Common myeloid progenitor, CD34-positive (primary cell): ENCODE measurements at regions of chr3 and their contacts with region 1.

Region 1: GRCh38 chr3:73086071-73086494 is 24.6 kb downstream of the EBLN2 start:
- DNase-seq: peak; percentile 46 to 61 (median 50)
- H3K4me3 ChIP-seq: peak overlapping the region in 1 of 7 experiments; percentile 2
- H3K27ac ChIP-seq: no peak overlapping the region
- H3K4me1 ChIP-seq: peaks cover 0 to 2% (median 0%) of the 10 kb centered on the region in 4 experiments
- H3K27me3 ChIP-seq: no peaks in the 10 kb centered on the region

Region 2: GRCh38 chr3:72847751-72848702 is 238.1 kb before region 1 on chr3 and contains the start of gene SHQ1:
- CTCF ChIA-PET with region 1: interaction called, 51 read pairs
- POLR2A ChIA-PET with region 1: no interaction called
- DNase-seq: peak; percentile 95 to 97 (median 97)
- H3K4me3 ChIP-seq: peak within 1 kb of the TSS; percentile 54 to 96 (median 87)
- H3K27ac ChIP-seq: peak within 1 kb of the TSS in 1 of 2 experiments; percentile 69
- H3K4me1 ChIP-seq: peaks cover 19 to 49% (median 32%) of the 10 kb centered on the region in 4 experiments
- H3K27me3 ChIP-seq: no peaks in the 10 kb centered on the region

Region 3: DNA sequence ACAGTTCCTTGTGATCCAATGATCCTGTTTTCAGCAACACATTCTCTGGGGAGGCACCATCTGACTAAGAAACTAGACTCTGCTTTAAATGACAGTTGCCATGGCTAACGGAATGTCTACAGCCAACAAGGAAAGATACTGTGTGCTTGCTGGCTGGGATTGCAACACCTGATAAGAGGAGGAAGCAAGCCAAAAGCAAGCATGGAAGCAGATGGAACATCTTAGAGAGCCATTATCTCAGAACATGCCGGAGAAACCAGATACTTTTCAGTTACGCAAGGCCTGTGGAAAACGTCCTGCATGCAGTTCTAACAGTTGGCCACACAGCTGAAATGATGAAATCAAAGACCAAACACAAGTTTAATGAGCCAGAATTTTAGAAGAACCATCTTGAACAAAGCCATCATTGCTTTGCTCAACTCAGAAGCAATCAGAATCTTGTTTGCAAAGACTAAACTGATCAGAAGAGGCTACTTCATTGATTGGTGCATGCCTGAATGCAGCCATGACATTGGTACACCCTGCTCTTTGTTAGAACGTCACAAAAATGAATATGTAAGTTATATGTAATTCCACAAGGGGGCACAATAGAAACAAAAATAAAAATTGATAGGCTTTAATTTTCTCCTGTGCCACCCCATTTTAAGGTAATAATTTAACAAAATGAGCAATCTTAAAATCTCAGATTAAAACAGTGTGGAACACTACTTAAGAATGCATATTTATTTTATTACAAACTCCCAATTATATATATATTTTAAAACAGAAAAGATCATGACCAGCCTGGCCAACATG is 147.4 kb before region 1 on chr3:
- CTCF ChIA-PET with region 1: interaction called, 15 read pairs
- POLR2A ChIA-PET with region 1: no interaction called
- DNase-seq: peak; percentile 51 to 80 (median 78)
- H3K4me3 ChIP-seq: no peak overlapping the region
- H3K27ac ChIP-seq: no peak overlapping the region
- H3K4me1 ChIP-seq: peaks cover 0 to 4% (median 0%) of the 10 kb centered on the region in 4 experiments
- H3K27me3 ChIP-seq: no peaks in the 10 kb centered on the region

Region 4: DNA sequence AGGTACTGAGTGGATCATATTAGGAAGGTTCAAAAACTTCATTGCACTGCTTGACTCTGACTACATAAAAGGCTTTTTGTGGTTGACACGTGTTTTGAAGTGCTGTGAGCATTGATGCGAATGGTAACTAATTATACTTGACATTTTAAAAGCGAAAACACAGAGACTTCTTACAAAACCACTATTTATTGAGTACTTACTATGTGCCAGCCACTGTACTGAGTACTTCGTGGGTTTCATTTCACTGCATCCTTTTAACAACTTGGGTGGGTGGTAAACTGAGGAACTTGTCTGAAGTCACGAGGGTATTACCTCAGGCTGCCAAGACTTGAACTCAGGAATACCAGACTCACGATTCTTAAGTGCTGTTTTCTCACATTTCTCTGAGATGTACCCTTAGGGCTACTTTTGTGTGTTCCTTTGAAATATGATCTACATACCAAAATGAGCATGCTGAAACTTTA is 134.8 kb before region 1 on chr3:
- CTCF ChIA-PET with region 1: interaction called, 10 read pairs
- POLR2A ChIA-PET with region 1: no interaction called
- DNase-seq: no peak
- H3K4me3 ChIP-seq: no peak overlapping the region
- H3K27ac ChIP-seq: no peak overlapping the region
- H3K4me1 ChIP-seq: no peaks in the 10 kb centered on the region
- H3K27me3 ChIP-seq: no peaks in the 10 kb centered on the region

Region 5: DNA sequence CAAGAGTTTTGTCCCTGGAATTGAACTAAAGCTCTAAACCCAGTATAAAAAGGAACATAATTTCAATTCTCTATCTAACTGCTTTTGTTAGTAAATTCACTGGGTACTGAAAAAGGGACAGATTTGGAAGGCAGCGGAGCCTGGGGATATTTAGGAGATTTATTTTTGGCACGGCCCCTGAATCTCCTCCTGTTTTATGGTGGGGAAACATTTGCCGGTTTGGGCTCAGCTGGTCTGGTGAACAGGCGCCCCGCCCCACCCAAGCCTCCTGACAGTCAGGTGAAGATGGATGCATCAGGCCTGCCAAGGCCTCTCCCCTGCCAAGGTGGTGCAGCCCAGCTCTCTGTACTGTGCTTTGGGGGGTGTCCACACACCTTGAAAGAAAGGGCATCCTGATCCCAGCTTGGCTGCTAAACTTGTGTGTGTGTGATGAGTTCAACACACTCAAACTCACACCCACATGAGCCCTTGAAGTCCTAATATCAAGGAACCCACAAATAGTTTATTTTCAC is 21.6 kb after region 1 on chr3:
- CTCF ChIA-PET with region 1: no interaction called
- POLR2A ChIA-PET with region 1: no interaction called
- DNase-seq: no peak
- H3K4me3 ChIP-seq: no peak overlapping the region
- H3K27ac ChIP-seq: no peak overlapping the region
- H3K4me1 ChIP-seq: no peaks in the 10 kb centered on the region
- H3K27me3 ChIP-seq: peaks cover 0 to 3% (median 0%) of the 10 kb centered on the region in 5 experiments

Region 6: DNA sequence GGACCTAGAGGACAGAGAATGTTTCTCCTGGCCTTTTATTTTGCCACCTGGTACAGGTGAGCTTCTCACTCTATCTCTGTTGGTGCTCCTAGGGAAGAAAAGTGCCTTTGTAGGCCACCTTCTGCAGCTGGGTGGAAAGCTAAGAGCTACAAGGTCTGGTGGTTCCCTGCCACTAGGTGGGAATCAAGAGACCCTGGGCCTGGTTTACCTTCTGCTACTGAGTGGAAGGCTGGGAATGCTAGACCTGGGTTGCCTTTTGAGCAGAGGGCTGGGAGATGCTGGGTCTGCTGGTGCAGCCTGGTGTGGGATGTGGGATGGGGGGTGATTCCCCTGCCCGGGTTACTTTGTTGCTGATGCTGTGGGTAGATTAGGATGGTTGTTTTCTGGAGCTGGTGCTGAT is 48.0 kb after region 1 on chr3:
- CTCF ChIA-PET with region 1: no interaction called
- POLR2A ChIA-PET with region 1: no interaction called
- DNase-seq: no peak
- H3K4me3 ChIP-seq: no peak overlapping the region
- H3K27ac ChIP-seq: no peak overlapping the region
- H3K4me1 ChIP-seq: no peaks in the 10 kb centered on the region
- H3K27me3 ChIP-seq: peaks cover 0 to 4% (median 2%) of the 10 kb centered on the region in 5 experiments